HepG2 (cell line): ENCODE measurements at regions of chr7 and their contacts with region 1.

Region 1: DNA sequence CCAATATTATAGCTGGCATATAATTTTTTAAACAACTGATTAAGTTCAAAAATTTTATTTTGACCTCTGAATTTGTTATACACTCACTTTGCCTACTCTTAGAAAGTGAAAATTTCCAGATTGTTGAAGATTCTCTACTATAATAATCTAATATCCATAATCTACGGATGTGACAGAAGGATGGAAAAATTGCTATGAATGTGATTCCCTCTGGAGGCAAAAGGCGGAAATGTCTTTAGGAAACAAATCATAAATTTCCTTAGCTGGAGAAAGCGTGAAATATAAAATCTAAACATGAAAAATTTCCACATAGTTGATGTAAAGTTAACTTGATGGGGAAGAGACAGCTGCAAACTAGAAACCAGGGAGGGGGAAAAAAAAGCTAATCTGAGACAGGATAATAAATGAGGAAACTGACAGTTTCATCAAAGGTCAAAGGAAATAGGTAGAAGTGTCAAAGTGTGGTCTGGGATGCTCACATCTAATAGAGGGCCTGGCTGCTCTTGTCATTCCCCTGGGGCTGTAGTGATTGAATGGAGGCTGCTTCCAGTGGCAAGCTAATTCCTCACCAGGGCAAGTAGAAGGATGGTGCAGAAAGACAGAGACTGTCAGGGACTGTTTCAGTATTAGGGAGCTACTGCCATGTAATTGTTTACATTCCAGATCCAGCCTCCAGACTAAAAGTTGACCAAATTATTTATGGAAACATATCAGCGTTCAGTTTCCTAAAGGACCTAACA is 264.5 kb downstream of the SDHAF3 start:
- DNase-seq: no peak
- ATAC-seq: no peak
- H3K4me3 ChIP-seq: no peak overlapping the region
- H3K27ac ChIP-seq: no peak overlapping the region
- H3K4me1 ChIP-seq: no peaks in the 10 kb centered on the region
- H3K27me3 ChIP-seq: no peaks in the 10 kb centered on the region; a peak in 1 of 5 replicates
- CTCF ChIP-seq: no peak
- EP300 ChIP-seq: no peak
- POLR2A ChIP-seq: no peak
- RAD21 ChIP-seq: no peak

Region 2: DNA sequence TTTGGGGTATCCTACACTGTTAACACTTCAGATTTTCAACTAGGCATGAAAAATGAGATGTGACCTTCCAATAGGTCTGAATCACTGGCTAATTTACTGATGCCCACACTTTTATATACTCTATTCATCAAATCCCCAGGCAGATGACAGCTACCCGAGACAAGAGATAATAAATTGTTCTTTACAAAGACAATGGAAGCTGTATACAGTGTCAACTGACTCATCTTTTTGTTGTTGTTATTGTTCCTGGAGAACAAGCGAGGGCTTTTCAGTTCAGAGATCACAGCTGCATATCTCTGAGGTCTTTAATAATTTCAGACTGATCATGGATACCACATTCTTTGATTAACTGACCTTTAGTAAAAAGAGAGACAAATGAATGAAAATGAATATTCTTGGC is 35.6 kb before region 1 on chr7:
- CTCF ChIA-PET with region 1: no interaction called
- POLR2A ChIA-PET with region 1: no interaction called
- in situ Hi-C with region 1: no loop called
- intact Hi-C with region 1: loop called (anchors 1 kb)
- DNase-seq: no peak
- ATAC-seq: no peak
- H3K4me3 ChIP-seq: no peak overlapping the region
- H3K27ac ChIP-seq: no peak overlapping the region
- H3K4me1 ChIP-seq: no peaks in the 10 kb centered on the region
- H3K27me3 ChIP-seq: peaks cover 0 to 3% of the 10 kb centered on the region in 2 experiments; a peak in 1 of 5 replicates
- CTCF ChIP-seq: no peak
- EP300 ChIP-seq: no peak
- POLR2A ChIP-seq: no peak
- RAD21 ChIP-seq: no peak

Region 3: DNA sequence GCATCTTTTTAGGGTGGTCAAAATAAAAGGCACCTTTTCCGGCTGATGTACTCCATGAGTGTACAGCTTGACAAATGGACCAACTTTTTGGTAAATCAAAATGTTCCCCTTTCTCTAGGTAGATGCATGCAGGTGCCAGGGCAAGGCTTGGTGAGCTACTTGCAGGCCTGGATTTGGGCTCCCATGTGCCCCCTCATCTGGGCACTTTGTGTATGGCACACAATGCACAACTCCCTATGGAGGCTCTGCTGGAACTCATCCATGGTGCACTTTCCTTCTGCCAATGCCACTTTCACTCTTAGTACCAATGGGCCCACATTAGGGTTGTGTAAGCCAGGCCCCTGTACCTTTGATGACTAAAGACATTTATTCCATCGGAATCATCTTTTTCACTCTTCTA is 36.3 kb after region 1 on chr7:
- CTCF ChIA-PET with region 1: no interaction called
- POLR2A ChIA-PET with region 1: no interaction called
- in situ Hi-C with region 1: no loop called
- intact Hi-C with region 1: no loop called
- DNase-seq: no peak
- ATAC-seq: no peak; the same call in 2 of the 3 replicates
- H3K4me3 ChIP-seq: no peak overlapping the region
- H3K27ac ChIP-seq: no peak overlapping the region
- H3K4me1 ChIP-seq: no peaks in the 10 kb centered on the region
- H3K27me3 ChIP-seq: no peaks in the 10 kb centered on the region
- CTCF ChIP-seq: 0 out of 2 replicates have a peak, but pooled peaks have one; percentile 8
- EP300 ChIP-seq: no peak
- POLR2A ChIP-seq: no peak
- RAD21 ChIP-seq: no peak